ENCODE measurements at regions of chr10 and their contacts with region 1.

Region 1: DNA sequence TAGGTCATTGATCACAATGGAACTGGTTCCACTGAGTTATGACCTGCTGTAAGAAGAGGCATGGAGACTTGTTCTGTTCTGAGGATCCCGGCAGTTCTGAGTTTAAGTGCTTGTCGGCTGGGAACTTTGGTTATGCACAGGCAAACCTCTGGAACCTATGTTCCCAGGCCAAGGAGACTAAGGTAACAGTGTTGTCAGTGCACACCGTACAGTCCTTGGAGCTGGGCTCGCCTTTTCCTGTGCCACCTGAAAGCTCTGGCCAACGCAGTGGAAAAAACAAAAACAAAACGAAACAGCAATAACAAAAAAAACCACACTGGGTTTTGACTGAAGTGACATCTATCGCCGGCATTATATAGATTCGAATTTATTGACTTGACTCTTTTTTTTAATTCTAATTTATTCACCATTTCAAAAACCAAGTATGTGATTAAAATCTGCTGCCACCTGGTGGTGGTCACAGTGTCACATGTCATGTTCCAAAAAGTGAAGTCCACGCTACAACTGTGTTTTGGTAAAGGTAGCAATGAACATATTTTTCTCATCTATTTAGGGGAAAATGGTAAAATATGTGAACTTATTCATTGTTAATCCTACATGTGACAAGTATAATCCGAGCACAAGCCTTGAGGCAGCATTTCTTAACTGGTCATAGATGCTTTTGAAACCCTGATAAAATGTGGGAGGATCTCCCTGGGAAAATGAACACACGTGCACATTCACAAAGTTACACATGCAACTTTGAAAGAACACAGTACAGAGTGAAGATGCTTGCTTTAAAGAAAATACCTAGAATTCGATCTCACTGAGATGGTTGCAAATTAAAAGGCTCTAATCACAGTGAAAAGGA is 113.8 kb upstream of the PPP2R2D start:
- DNase-seq: peak; percentile 17
- ATAC-seq: no peak; the same call in 1 of the 2 replicates
- H3K4me3 ChIP-seq: no peak overlapping the region
- H3K27ac ChIP-seq: no peak overlapping the region
- H3K4me1 ChIP-seq: no peaks in the 10 kb centered on the region
- H3K27me3 ChIP-seq: peaks cover 9% of the 10 kb centered on the region; the same call in 1 of the 2 replicates
- CTCF ChIP-seq: peak; percentile 83

Region 2: GRCh38 chr10:131453594-131454355 is 333.2 kb before region 1 on chr10:
- CTCF ChIA-PET with region 1: no interaction called
- POLR2A ChIA-PET with region 1: no interaction called
- in situ Hi-C with region 1: no loop called
- intact Hi-C with region 1: loop called (anchors 10 kb)
- DNase-seq: no peak
- ATAC-seq: peak; percentile 63; the same call in 1 of the 2 replicates
- H3K4me3 ChIP-seq: no peak overlapping the region
- H3K27ac ChIP-seq: no peak overlapping the region
- H3K4me1 ChIP-seq: no peaks in the 10 kb centered on the region
- H3K27me3 ChIP-seq: peaks cover 30% of the 10 kb centered on the region
- CTCF ChIP-seq: peak; percentile 92

Region 3: DNA sequence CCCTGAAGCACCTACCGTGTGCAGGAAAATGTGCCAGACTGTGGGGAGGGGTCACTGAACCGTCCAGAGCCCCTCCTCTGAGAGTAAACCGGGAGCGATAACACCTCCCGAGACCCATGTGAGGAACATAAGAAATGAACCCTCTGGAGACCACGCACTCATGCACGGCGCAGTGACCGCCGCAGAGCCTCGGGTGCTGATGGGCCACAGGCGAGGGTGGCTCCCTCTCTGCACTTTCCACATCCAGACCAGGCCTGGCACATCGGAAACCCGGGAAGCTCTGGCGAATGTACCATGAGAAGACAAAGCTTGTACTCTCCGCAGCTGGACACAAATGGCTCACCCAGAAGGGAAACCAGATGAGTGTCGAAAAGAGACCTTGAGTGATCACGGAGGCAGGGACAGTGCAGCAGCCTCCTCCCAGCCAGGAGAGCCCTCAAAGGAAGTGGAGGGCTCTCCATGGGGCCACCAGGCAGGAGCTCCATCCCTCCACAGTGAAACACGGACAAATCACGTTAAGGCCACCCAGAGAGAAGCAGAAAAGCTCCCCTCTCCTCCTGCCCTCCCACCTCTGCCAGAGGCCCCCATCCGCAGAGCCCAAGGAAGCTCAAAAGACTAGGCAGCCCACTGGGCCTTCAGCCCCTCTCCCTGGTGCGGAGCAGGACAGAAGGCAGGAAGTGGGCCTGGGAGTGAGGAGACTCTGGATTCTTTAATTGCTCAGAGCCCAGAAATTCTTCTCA is 64.3 kb before region 1 on chr10:
- CTCF ChIA-PET with region 1: no interaction called
- POLR2A ChIA-PET with region 1: no interaction called
- in situ Hi-C with region 1: no loop called
- intact Hi-C with region 1: no loop called
- DNase-seq: no peak
- ATAC-seq: no peak
- H3K4me3 ChIP-seq: no peak overlapping the region
- H3K27ac ChIP-seq: no peak overlapping the region
- H3K4me1 ChIP-seq: no peaks in the 10 kb centered on the region
- H3K27me3 ChIP-seq: no peaks in the 10 kb centered on the region
- CTCF ChIP-seq: no peak

Measured in Panc1 (cell line).